B cell (primary cell): ENCODE measurements at regions of chr20 and their contacts with region 1.

Region 1: GRCh38 chr20:48722737-48723191 is 105.0 kb downstream of the PREX1 start:
- DNase-seq: peak; percentile 58
- ATAC-seq: peak; percentile 55
- H3K4me3 ChIP-seq: peak overlapping the region in 1 of 5 experiments; percentile 21
- H3K4me3 Mint-ChIP-seq: peak overlapping the region; percentile 75
- H3K27ac ChIP-seq: peak overlapping the region; percentile 57 to 80
- H3K27ac Mint-ChIP-seq: peak overlapping the region; percentile 84
- H3K4me1 ChIP-seq: peaks cover 66 to 69% of the 10 kb centered on the region in 2 donors
- H3K4me1 Mint-ChIP-seq: peaks cover 73% of the 10 kb centered on the region
- H3K27me3 ChIP-seq: no peaks in the 10 kb centered on the region
- H3K27me3 Mint-ChIP-seq: no peaks in the 10 kb centered on the region
- CTCF ChIP-seq: no peak

Region 2: GRCh38 chr20:48738399-48739304 is 15.9 kb after region 1 on chr20:
- CTCF ChIA-PET with region 1: interaction called, 7 read pairs
- POLR2A ChIA-PET with region 1: interaction called, 5 read pairs
- intact Hi-C with region 1: loop called (anchors 2 kb)
- DNase-seq: no peak
- ATAC-seq: peak; percentile 32
- H3K4me3 ChIP-seq: no peak overlapping the region
- H3K4me3 Mint-ChIP-seq: peak overlapping the region; percentile 36
- H3K27ac ChIP-seq: no peak overlapping the region
- H3K27ac Mint-ChIP-seq: peak overlapping the region; percentile 74
- H3K4me1 ChIP-seq: peaks cover 45 to 63% of the 10 kb centered on the region in 2 donors
- H3K4me1 Mint-ChIP-seq: peaks cover 57% of the 10 kb centered on the region
- H3K27me3 ChIP-seq: no peaks in the 10 kb centered on the region
- H3K27me3 Mint-ChIP-seq: no peaks in the 10 kb centered on the region
- CTCF ChIP-seq: no peak

Region 3: GRCh38 chr20:48760403-48760983 is 37.7 kb after region 1 on chr20:
- CTCF ChIA-PET with region 1: no interaction called
- POLR2A ChIA-PET with region 1: interaction called, 9 read pairs
- intact Hi-C with region 1: loop called (anchors 2 kb)
- DNase-seq: peak; percentile 74
- ATAC-seq: peak; percentile 84
- H3K4me3 ChIP-seq: peak overlapping the region in 4 of 5 experiments; percentile 8 to 30 (median 18)
- H3K4me3 Mint-ChIP-seq: peak overlapping the region; percentile 89
- H3K27ac ChIP-seq: peak overlapping the region; percentile 76 to 80
- H3K27ac Mint-ChIP-seq: peak overlapping the region; percentile 98
- H3K4me1 ChIP-seq: peaks cover 41 to 69% of the 10 kb centered on the region in 2 donors
- H3K4me1 Mint-ChIP-seq: peaks cover 79% of the 10 kb centered on the region
- H3K27me3 ChIP-seq: no peaks in the 10 kb centered on the region
- H3K27me3 Mint-ChIP-seq: no peaks in the 10 kb centered on the region
- CTCF ChIP-seq: no peak

Region 4: GRCh38 chr20:48904365-48905296 is 181.9 kb after region 1 on chr20:
- CTCF ChIA-PET with region 1: interaction called, 12 read pairs
- POLR2A ChIA-PET with region 1: interaction called, 6 read pairs
- intact Hi-C with region 1: loop called (anchors 5 kb)
- DNase-seq: peak; percentile 81
- ATAC-seq: peak; percentile 78
- H3K4me3 ChIP-seq: no peak overlapping the region
- H3K4me3 Mint-ChIP-seq: peak overlapping the region; percentile 19
- H3K27ac ChIP-seq: no peak overlapping the region
- H3K27ac Mint-ChIP-seq: no peak overlapping the region
- H3K4me1 ChIP-seq: peaks cover 6 to 7% of the 10 kb centered on the region in 2 donors
- H3K4me1 Mint-ChIP-seq: peaks cover 10% of the 10 kb centered on the region
- H3K27me3 ChIP-seq: no peaks in the 10 kb centered on the region
- H3K27me3 Mint-ChIP-seq: no peaks in the 10 kb centered on the region
- CTCF ChIP-seq: peak; percentile 90

Region 5: GRCh38 chr20:49063279-49063678 is 340.5 kb after region 1 on chr20:
- CTCF ChIA-PET with region 1: no interaction called
- POLR2A ChIA-PET with region 1: no interaction called
- intact Hi-C with region 1: no loop called
- DNase-seq: no peak
- ATAC-seq: no peak
- H3K4me3 ChIP-seq: no peak overlapping the region
- H3K4me3 Mint-ChIP-seq: no peak overlapping the region
- H3K27ac ChIP-seq: no peak overlapping the region
- H3K27ac Mint-ChIP-seq: no peak overlapping the region
- H3K4me1 ChIP-seq: no peaks in the 10 kb centered on the region
- H3K4me1 Mint-ChIP-seq: peaks cover 1% of the 10 kb centered on the region
- H3K27me3 ChIP-seq: no peaks in the 10 kb centered on the region
- H3K27me3 Mint-ChIP-seq: no peaks in the 10 kb centered on the region
- CTCF ChIP-seq: no peak